K562 (cell line): ENCODE measurements at regions of chr11 and their contacts with region 1.

Region 1: GRCh38 chr11:13343931-13344717 is 66.5 kb downstream of the BMAL1 start:
- DNase-seq: peak; percentile 59 to 75 (median 66)
- ATAC-seq: peak; percentile 84
- H3K4me3 ChIP-seq: no peak overlapping the region
- H3K27ac ChIP-seq: no peak overlapping the region
- H3K4me1 ChIP-seq: no peaks in the 10 kb centered on the region
- H3K27me3 ChIP-seq: peaks cover under 1 to 29% of the 10 kb centered on the region in 2 experiments; a peak in 3 of 5 replicates
- CTCF ChIP-seq: peak; percentile 75 to 86 (median 75)
- EP300 ChIP-seq: no peak
- POLR2A ChIP-seq: no peak
- RAD21 ChIP-seq: peak; percentile 71 to 83

Region 2: DNA sequence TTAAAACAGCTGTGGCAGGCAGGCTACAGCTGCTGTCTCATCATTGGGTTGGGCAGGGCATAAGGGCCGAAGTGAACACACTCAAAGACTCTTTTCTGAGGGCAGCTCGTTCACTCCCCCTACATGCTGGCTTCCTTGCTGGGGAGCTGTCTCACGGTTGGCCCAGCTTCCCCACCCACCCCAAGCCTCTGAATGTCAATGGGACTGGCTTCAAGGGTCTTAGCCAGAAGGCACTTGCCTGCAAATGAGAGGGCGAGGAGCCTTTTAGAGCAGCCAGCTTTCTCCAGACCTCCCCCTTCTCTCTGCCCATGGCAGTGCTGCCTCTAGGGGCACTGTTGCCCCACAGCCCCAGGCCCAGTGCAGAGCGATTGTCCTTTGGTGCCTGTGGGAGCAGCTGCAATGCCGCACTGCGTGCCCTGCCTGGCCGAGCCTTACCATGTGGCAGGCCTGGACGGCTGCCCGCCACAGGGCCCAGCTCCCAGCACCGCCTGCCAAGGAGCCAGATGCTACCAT is 429.7 kb before region 1 on chr11:
- CTCF ChIA-PET with region 1: no interaction called
- POLR2A ChIA-PET with region 1: no interaction called
- in situ Hi-C with region 1: loop called (anchors 10 kb)
- intact Hi-C with region 1: no loop called
- DNase-seq: peak; percentile 34 to 65 (median 46)
- ATAC-seq: peak; percentile 99
- H3K4me3 ChIP-seq: no peak overlapping the region
- H3K27ac ChIP-seq: no peak overlapping the region
- H3K4me1 ChIP-seq: 0 out of 5 replicates have a peak, but pooled peaks cover 0 to 4% of the 10 kb centered on the region in 2 experiments
- H3K27me3 ChIP-seq: no peaks in the 10 kb centered on the region
- CTCF ChIP-seq: peak; percentile 61 to 71 (median 67)
- EP300 ChIP-seq: no peak
- POLR2A ChIP-seq: no peak
- RAD21 ChIP-seq: peak in 1 of 2 experiments; percentile 47; a peak in 2 of 4 replicates

Region 3: GRCh38 chr11:13183094-13183825 is 160.9 kb before region 1 on chr11:
- CTCF ChIA-PET with region 1: interaction called, 21 read pairs
- POLR2A ChIA-PET with region 1: no interaction called
- in situ Hi-C with region 1: no loop called
- intact Hi-C with region 1: loop called (anchors 1 kb)
- DNase-seq: peak in 2 of 4 experiments; percentile 17 to 31
- ATAC-seq: peak; percentile 73
- H3K4me3 ChIP-seq: no peak overlapping the region
- H3K27ac ChIP-seq: no peak overlapping the region
- H3K4me1 ChIP-seq: no peaks in the 10 kb centered on the region
- H3K27me3 ChIP-seq: no peaks in the 10 kb centered on the region; a peak in 1 of 5 replicates
- CTCF ChIP-seq: peak; percentile 34 to 65 (median 46); a peak in 4 of 6 replicates
- EP300 ChIP-seq: no peak
- POLR2A ChIP-seq: no peak
- RAD21 ChIP-seq: peak; percentile 68 to 69

Region 4: GRCh38 chr11:13210424-13210823 is 133.7 kb before region 1 on chr11:
- CTCF ChIA-PET with region 1: interaction called, 11 read pairs
- POLR2A ChIA-PET with region 1: no interaction called
- in situ Hi-C with region 1: loop called (anchors 10 kb)
- intact Hi-C with region 1: loop called (anchors 1 kb)
- DNase-seq: peak; percentile 16 to 21 (median 18)
- ATAC-seq: peak; percentile 62; the same call in 2 of the 3 replicates
- H3K4me3 ChIP-seq: no peak overlapping the region
- H3K27ac ChIP-seq: no peak overlapping the region
- H3K4me1 ChIP-seq: peaks cover 5 to 7% of the 10 kb centered on the region in 2 experiments; a peak in 2 of 5 replicates
- H3K27me3 ChIP-seq: peaks cover 15 to 28% of the 10 kb centered on the region in 2 experiments
- CTCF ChIP-seq: peak; percentile 39 to 58 (median 40); a peak in 5 of 6 replicates
- EP300 ChIP-seq: no peak
- POLR2A ChIP-seq: no peak
- RAD21 ChIP-seq: peak; percentile 68 to 72

Region 5: DNA sequence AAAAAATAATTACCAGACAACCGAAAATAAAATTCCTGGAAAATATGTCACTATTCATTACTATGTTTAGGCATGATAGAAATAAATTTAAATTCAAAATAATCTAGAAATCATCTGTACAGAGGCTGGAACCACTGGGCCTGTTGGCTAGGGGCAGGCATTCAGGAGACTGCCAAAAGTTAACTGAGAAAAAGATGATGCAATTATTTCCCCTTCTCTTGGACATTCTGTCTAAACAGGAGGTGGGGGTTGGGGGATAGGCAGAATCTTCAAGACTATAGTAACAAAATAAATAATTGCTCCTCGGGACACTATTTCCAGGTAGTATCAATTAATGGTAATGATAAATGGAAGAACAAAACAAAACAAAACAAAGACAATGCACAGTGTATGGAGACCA is 104.8 kb after region 1 on chr11:
- CTCF ChIA-PET with region 1: no interaction called
- POLR2A ChIA-PET with region 1: no interaction called
- in situ Hi-C with region 1: no loop called
- intact Hi-C with region 1: no loop called
- DNase-seq: peak in 2 of 4 experiments; percentile 10 to 11
- ATAC-seq: peak; percentile 78
- H3K4me3 ChIP-seq: no peak overlapping the region
- H3K27ac ChIP-seq: no peak overlapping the region; the same call in 2 of the 3 replicates
- H3K4me1 ChIP-seq: no peaks in the 10 kb centered on the region
- H3K27me3 ChIP-seq: no peaks in the 10 kb centered on the region
- CTCF ChIP-seq: no peak
- EP300 ChIP-seq: no peak
- POLR2A ChIP-seq: no peak
- RAD21 ChIP-seq: no peak